ENCODE measurements at regions of chr5 and their contacts with region 1.

Region 1: DNA sequence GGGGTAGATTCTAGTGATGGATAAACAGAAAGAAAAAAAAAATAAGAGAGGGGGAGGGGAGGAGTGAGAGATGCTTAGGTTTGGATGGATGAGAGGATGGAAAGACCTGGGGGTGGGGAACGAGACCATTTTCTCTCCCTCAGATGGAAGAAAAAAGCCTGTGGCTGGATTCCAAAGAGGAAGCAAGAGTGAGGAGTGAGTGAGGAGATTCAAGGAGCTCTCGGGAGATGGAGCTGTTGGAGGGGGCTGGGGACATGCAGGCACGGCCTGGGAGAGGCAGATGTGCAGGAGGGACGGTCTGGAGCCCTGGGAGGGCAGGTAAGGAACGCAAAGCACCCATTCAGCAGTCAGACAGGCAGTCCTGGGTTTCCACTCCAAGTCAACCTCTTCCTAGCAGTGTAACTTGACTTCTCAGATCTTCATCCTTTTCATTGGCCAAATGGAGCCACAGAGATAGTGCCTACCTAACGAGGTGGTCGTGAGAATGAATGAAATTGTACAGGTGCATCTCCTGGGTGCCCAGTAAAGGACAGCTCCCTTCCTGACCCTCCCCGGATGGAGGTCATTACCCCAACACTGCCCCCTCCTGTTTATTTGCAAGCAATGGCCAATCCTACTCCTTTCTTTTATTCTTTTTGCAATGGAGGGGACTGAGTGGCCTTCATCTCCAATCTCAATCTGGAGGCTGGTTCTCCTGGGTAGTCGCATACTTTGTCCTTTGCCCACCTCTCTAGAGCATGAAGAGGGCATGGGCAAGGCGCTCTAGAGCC is 52.2 kb downstream of the PCDH1 start:
- DNase-seq: no peak
- ATAC-seq: peak; percentile 69
- H3K4me3 Mint-ChIP-seq: no peak overlapping the region
- H3K27ac Mint-ChIP-seq: 0 out of 2 replicates have a peak overlapping the region, but pooled peaks have one; percentile 28
- H3K4me1 Mint-ChIP-seq: peaks cover 62% of the 10 kb centered on the region
- H3K27me3 Mint-ChIP-seq: no peaks in the 10 kb centered on the region
- CTCF ChIP-seq: peak; percentile 37

Region 2: GRCh38 chr5:141701360-141702119 is 124.4 kb before region 1 on chr5:
- CTCF ChIA-PET with region 1: interaction called, 42 read pairs
- POLR2A ChIA-PET with region 1: no interaction called
- DNase-seq: no peak
- ATAC-seq: no peak
- H3K4me3 Mint-ChIP-seq: no peak overlapping the region; the same call in 1 of the 2 replicates
- H3K27ac Mint-ChIP-seq: no peak overlapping the region
- H3K4me1 Mint-ChIP-seq: peaks cover 22% of the 10 kb centered on the region
- H3K27me3 Mint-ChIP-seq: peaks cover 6% of the 10 kb centered on the region
- CTCF ChIP-seq: no peak

Region 3: GRCh38 chr5:141722266-141722665 is 103.7 kb before region 1 on chr5:
- CTCF ChIA-PET with region 1: no interaction called
- POLR2A ChIA-PET with region 1: no interaction called
- DNase-seq: no peak
- ATAC-seq: no peak
- H3K4me3 Mint-ChIP-seq: no peak overlapping the region
- H3K27ac Mint-ChIP-seq: no peak overlapping the region
- H3K4me1 Mint-ChIP-seq: peaks cover 18% of the 10 kb centered on the region
- H3K27me3 Mint-ChIP-seq: peaks cover 6% of the 10 kb centered on the region; the same call in 1 of the 2 replicates
- CTCF ChIP-seq: no peak

Region 4: GRCh38 chr5:141783005-141783941 is 42.7 kb before region 1 on chr5:
- CTCF ChIA-PET with region 1: interaction called, 10 read pairs
- POLR2A ChIA-PET with region 1: no interaction called
- DNase-seq: peak; percentile 48
- ATAC-seq: peak; percentile 29
- H3K4me3 Mint-ChIP-seq: no peak overlapping the region
- H3K27ac Mint-ChIP-seq: no peak overlapping the region
- H3K4me1 Mint-ChIP-seq: peaks cover 43% of the 10 kb centered on the region
- H3K27me3 Mint-ChIP-seq: no peaks in the 10 kb centered on the region
- CTCF ChIP-seq: no peak

Region 5: GRCh38 chr5:141835928-141836670 is 10.1 kb after region 1 on chr5:
- CTCF ChIA-PET with region 1: interaction called, 78 read pairs
- POLR2A ChIA-PET with region 1: interaction called, 21 read pairs
- DNase-seq: no peak
- ATAC-seq: peak; percentile 5; the same call in 1 of the 2 replicates
- H3K4me3 Mint-ChIP-seq: peak overlapping the region; percentile 29; the same call in 1 of the 2 replicates
- H3K27ac Mint-ChIP-seq: peak overlapping the region; percentile 96
- H3K4me1 Mint-ChIP-seq: peaks cover 76% of the 10 kb centered on the region
- H3K27me3 Mint-ChIP-seq: peaks cover 8% of the 10 kb centered on the region
- CTCF ChIP-seq: no peak

Region 6: DNA sequence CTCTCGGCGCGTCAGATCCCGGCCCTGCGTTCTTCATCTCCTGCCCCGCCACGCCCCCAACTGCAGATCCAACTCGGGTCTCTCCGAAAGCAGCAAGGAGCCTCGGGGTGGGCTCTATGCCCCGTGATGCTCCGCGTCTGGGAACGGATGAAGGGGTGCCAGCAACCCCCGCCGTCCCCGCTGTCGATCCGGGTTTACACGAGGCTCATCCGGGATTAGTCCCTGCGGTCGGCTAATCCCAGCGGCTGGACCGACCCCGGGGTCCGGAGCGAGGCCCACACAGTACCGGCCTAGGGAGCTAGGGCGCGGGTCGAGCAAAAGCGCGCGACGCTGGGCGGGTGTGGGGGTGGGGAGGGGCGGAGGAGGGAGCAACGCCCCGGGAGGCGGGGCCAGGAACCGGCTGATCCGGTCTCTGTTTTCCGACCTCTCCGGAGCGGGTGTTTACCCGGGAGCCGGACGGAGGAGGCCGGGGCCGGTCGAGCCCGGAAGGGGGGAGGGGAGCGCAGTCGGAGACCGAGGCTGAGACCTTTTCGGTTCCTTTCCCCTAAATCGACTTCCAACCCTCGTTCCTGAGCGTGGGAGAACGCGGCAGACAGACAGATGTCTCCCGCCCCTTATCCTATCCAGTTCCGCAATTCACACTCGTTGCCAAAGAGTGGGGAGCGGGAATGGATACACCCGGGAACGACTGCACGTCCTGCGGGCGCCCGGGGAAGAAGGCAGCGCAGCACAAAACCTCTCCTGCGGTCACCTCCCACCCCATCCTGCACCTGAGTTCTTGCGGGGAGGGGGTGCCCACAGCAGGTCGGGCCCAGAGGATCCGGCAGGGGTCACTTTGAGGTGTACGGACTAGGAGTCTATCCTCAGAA is 23.6 kb after region 1 on chr5:
- CTCF ChIA-PET with region 1: interaction called, 23 read pairs
- POLR2A ChIA-PET with region 1: interaction called, 7 read pairs
- DNase-seq: peak; percentile 94
- ATAC-seq: peak; percentile 47
- H3K4me3 Mint-ChIP-seq: peak overlapping the region; percentile 73
- H3K27ac Mint-ChIP-seq: peak overlapping the region; percentile 99
- H3K4me1 Mint-ChIP-seq: peaks cover 68% of the 10 kb centered on the region
- H3K27me3 Mint-ChIP-seq: no peaks in the 10 kb centered on the region
- CTCF ChIP-seq: no peak